H1 (cell line): ENCODE measurements at regions of chr2 and their contacts with region 1.

Region 1: GRCh38 chr2:60629305-60629662 is 75.8 kb upstream of the BCL11A start:
- DNase-seq: no peak
- H3K4me3 ChIP-seq: no peak overlapping the region
- H3K27ac ChIP-seq: no peak overlapping the region
- H3K4me1 ChIP-seq: no peaks in the 10 kb centered on the region; a peak in 1 of 7 replicates
- H3K27me3 ChIP-seq: no peaks in the 10 kb centered on the region
- CTCF ChIP-seq: no peak
- EP300 ChIP-seq: no peak
- POLR2A ChIP-seq: no peak
- RAD21 ChIP-seq: no peak

Region 2: DNA sequence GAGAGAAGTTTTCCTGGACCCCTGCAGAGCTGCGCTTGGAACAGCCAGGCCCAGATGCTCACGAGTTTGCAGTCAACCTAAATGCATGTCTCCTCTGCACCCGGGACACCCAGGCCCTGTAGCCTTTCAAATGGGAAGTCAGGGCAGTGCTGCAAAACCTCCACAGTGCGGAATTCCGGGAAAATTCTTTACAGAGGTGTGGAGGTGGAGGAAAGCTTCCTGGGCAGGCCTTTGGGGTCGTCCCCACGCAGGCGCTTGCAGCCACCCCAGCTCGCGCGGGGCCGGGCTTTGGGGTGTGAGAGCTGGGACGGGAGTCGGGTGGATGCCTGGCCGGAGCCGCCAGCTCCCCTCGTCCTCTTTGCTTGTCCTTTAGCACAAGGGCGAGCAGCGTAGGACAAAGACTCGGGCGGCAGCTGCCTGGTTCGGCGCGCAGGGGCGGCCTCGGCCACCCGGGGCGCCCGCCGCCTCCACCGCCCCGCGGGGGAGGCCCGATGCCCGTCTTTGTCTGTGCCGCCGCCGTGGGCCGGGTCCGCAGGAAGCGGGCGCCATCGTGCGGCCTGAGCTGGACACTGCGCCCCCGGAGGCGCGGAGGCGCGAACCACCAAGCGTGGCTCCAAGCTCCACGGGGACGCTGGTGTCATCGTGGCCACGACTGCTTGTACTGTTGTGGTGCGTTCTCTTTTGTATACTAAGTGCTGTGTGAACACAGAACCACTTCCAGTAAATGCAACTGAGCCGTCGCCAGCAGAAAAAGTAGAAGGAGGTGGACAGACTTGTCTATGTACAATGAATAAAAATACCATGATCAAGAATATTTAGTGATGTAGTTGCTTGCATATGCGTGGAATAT is 47.6 kb before region 1 on chr2:
- CTCF ChIA-PET with region 1: interaction called, 10 read pairs
- POLR2A ChIA-PET with region 1: no interaction called
- DNase-seq: peak in 1 of 2 experiments; percentile 92
- H3K4me3 ChIP-seq: peak overlapping the region; percentile 22 to 70 (median 52)
- H3K27ac ChIP-seq: no peak overlapping the region
- H3K4me1 ChIP-seq: peaks cover 0 to 3% (median 0%) of the 10 kb centered on the region in 4 experiments; a peak in 1 of 7 replicates
- H3K27me3 ChIP-seq: peaks cover 1 to 12% (median 10%) of the 10 kb centered on the region in 4 experiments; a peak in 6 of 7 replicates
- CTCF ChIP-seq: peak; percentile 86 to 98 (median 95)
- EP300 ChIP-seq: peak in 1 of 2 experiments; percentile 49; a peak in 1 of 3 replicates
- POLR2A ChIP-seq: no peak
- RAD21 ChIP-seq: peak; percentile 92 to 97

Region 3: GRCh38 chr2:60602828-60603532 is 26.3 kb before region 1 on chr2:
- CTCF ChIA-PET with region 1: no interaction called
- POLR2A ChIA-PET with region 1: no interaction called
- DNase-seq: no peak
- H3K4me3 ChIP-seq: no peak overlapping the region
- H3K27ac ChIP-seq: no peak overlapping the region
- H3K4me1 ChIP-seq: peaks cover 3 to 8% (median 3%) of the 10 kb centered on the region in 4 experiments; a peak in 4 of 7 replicates
- H3K27me3 ChIP-seq: no peaks in the 10 kb centered on the region
- CTCF ChIP-seq: no peak
- EP300 ChIP-seq: no peak
- POLR2A ChIP-seq: no peak
- RAD21 ChIP-seq: no peak